Lower leg skin (tissue), 4 donors: ENCODE measurements at regions of chr2 and their contacts with region 1.

Region 1: GRCh38 chr2:63378589-63378988 is 209.7 kb downstream of the WDPCP start:
- DNase-seq: no peak
- H3K4me3 ChIP-seq: no peak overlapping the region
- CTCF ChIP-seq: no peak
- POLR2A ChIP-seq: no peak

Region 2: GRCh38 chr2:62660087-62660486 is 718.5 kb before region 1 on chr2:
- intact Hi-C with region 1: no loop called
- DNase-seq: no peak
- H3K4me3 ChIP-seq: no peak overlapping the region
- CTCF ChIP-seq: no peak
- POLR2A ChIP-seq: no peak

Region 3: DNA sequence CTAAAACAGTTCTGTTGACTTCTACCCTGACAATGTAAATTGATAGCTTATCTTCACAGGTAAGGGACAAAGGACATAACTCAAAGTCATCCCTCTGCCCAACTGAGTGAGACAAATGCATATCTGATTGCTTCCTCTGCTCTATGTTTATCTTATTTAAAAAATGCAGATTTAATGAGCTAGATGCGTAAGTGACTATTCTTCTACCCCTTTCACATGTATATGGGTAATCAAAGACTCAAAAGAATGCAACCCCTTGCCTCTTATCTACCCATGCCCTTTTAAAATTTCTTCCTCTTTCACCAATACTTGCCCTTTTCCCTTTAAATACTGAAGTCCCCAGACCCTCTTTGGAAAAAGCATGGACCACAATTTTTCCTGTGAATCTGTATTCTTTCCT is 43.7 kb before region 1 on chr2:
- intact Hi-C with region 1: no loop called
- DNase-seq: no peak
- H3K4me3 ChIP-seq: no peak overlapping the region
- CTCF ChIP-seq: no peak
- POLR2A ChIP-seq: no peak

Region 4: GRCh38 chr2:63399156-63399555 is 20.6 kb after region 1 on chr2:
- intact Hi-C with region 1: loop called (anchors 1 kb)
- DNase-seq: no peak
- H3K4me3 ChIP-seq: no peak overlapping the region
- CTCF ChIP-seq: no peak
- POLR2A ChIP-seq: no peak

Region 5: DNA sequence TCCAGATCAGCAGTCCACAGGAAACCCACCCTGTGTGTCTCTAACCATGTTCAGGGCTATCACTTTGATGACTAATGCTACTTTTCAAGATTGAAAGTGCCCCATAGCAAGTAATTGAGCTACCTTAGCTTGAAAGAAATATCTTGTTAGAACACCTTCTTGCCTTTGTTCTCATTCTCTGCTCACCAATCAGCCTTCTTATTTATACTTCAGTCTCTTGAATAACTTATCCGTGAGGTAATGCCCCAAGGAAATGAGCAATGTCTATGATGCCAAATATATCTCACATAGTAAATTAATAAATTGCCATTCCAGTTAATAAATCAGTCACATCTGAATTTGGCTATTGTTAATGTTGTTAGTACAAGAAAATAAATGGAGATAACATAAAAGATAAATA is 68.1 kb after region 1 on chr2:
- intact Hi-C with region 1: no loop called
- DNase-seq: no peak
- H3K4me3 ChIP-seq: no peak overlapping the region
- CTCF ChIP-seq: no peak
- POLR2A ChIP-seq: no peak

Region 6: GRCh38 chr2:63569740-63570139 is 191.2 kb after region 1 on chr2:
- intact Hi-C with region 1: no loop called
- DNase-seq: no peak
- H3K4me3 ChIP-seq: no peak overlapping the region
- CTCF ChIP-seq: no peak
- POLR2A ChIP-seq: no peak